PC-9 (cell line): ENCODE measurements at regions of chr2 and their contacts with region 1.

Region 1: GRCh38 chr2:149994057-149994753 is 406.6 kb upstream of the MMADHC start:
- DNase-seq: peak; percentile 89 to 95
- H3K4me3 ChIP-seq: no peak overlapping the region
- H3K27ac ChIP-seq: peak overlapping the region; percentile 82
- H3K4me1 ChIP-seq: peaks cover 30% of the 10 kb centered on the region
- H3K27me3 ChIP-seq: no peaks in the 10 kb centered on the region
- CTCF ChIP-seq: no peak

Region 2: DNA sequence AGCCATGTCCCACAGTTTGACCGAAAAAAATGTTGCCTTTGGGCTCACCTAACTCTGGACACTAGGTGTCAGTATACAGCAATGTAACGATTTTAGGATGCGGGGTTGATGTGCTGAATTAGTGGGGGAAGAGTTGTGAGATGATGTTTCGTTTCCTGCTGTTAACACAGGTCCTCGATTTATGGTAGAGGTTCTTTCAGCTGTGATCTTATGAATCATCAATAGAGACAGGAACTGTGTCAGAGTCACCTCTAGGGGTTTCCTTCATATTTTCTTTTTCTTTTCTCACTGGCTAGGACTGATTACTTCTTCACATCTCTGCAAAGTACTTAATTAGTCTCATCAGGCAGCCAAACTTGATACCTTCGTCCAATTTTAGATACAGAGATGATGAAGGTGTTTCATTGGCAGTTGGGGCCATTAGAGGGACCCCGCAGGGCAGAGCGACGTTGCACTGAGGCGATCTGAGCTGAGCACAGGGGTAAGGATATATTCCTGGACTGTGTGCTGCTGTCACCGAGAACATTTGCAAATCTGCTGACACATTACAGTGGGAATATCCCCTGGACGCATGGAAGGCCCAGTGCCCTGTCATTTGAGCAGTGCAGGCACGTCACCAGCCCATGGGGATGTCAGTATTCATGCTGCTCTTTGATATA is 396.4 kb before region 1 on chr2:
- CTCF ChIA-PET with region 1: no interaction called
- POLR2A ChIA-PET with region 1: interaction called, 3 read pairs
- intact Hi-C with region 1: loop called (anchors 1 kb)
- DNase-seq: peak; percentile 50 to 65
- H3K4me3 ChIP-seq: no peak overlapping the region
- H3K27ac ChIP-seq: no peak overlapping the region
- H3K4me1 ChIP-seq: peaks cover 6% of the 10 kb centered on the region; the same call in 1 of the 2 replicates
- H3K27me3 ChIP-seq: no peaks in the 10 kb centered on the region
- CTCF ChIP-seq: peak; percentile 70

Region 3: DNA sequence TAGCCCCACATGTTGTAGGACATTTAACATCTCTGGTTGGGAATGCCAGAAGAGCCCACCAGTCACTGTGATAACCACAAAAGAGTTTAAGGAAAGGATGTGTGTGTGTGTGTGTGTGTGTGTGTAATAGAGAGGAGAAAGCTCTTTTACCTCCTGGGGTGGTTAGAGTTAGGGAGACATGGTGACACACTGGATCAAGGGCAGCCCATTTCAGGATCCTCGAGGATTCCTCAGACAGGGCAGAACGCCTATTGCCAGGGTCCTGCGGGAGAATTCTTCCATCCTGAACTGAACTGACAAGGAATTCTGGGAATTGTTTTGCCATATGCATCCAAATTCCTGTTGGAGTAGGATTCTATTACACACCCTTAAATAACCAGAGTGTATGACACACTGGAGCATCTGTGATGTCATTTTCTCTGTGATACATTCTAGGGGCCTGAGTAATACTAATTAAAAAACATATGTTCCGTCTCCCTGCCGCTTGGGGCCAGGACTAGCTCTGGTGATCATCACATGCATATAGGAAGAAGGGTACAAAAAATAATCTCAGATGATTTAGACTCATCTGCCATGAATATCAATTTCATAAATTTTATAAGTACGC is 250.3 kb before region 1 on chr2:
- CTCF ChIA-PET with region 1: no interaction called
- POLR2A ChIA-PET with region 1: no interaction called
- intact Hi-C with region 1: no loop called
- DNase-seq: no peak
- H3K4me3 ChIP-seq: no peak overlapping the region
- H3K27ac ChIP-seq: no peak overlapping the region
- H3K4me1 ChIP-seq: no peaks in the 10 kb centered on the region
- H3K27me3 ChIP-seq: no peaks in the 10 kb centered on the region
- CTCF ChIP-seq: no peak

Region 4: DNA sequence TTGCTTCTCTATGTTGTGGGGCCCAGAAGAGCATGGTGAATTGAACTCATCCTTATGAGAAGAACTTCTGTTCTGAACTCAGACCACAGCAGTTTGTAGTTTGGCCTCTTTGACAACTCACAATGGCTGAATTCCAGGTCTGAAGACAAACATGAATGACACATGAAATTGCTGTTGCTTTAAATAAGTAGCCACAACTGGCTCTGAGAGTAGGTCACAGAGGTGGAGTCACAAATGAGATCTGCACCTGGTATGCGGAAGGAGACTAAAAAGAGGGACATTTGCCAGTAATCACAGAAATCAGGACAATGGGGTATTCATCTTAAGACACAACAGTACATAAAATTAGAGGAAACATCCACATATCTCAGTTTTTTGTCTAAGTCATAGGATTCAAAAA is 116.3 kb before region 1 on chr2:
- CTCF ChIA-PET with region 1: no interaction called
- POLR2A ChIA-PET with region 1: no interaction called
- intact Hi-C with region 1: loop called (anchors 1 kb)
- DNase-seq: peak; percentile 32 to 66
- H3K4me3 ChIP-seq: no peak overlapping the region
- H3K27ac ChIP-seq: 0 out of 2 replicates have a peak overlapping the region, but pooled peaks have one; percentile 26
- H3K4me1 ChIP-seq: 0 out of 2 replicates have a peak, but pooled peaks cover 6% of the 10 kb centered on the region
- H3K27me3 ChIP-seq: no peaks in the 10 kb centered on the region
- CTCF ChIP-seq: no peak

Region 5: DNA sequence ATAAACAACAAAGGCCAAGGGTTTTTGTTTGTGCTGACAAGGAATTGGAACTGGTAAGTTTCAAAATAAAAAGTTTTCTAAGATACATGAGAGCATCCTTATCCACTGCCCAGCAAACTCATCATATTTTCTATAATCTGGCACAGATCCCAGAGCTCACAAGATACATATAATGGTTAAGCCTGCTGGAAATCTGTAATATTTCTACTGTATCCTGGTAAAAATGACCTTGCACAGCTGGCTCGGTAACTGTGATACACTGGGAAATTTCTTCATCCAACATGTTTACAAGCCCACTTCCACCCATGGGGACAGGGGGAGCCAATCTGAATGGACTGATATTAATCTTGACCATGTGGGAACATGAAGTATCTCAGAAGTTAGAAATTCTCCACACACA is 18.8 kb after region 1 on chr2:
- CTCF ChIA-PET with region 1: no interaction called
- POLR2A ChIA-PET with region 1: no interaction called
- intact Hi-C with region 1: no loop called
- DNase-seq: no peak
- H3K4me3 ChIP-seq: no peak overlapping the region
- H3K27ac ChIP-seq: no peak overlapping the region
- H3K4me1 ChIP-seq: no peaks in the 10 kb centered on the region
- H3K27me3 ChIP-seq: no peaks in the 10 kb centered on the region
- CTCF ChIP-seq: no peak

Region 6: GRCh38 chr2:150188177-150188576 is 194.0 kb after region 1 on chr2:
- CTCF ChIA-PET with region 1: no interaction called
- POLR2A ChIA-PET with region 1: interaction called, 3 read pairs
- intact Hi-C with region 1: loop called (anchors 1 kb)
- DNase-seq: peak in 1 of 2 experiments; percentile 68
- H3K4me3 ChIP-seq: no peak overlapping the region
- H3K27ac ChIP-seq: peak overlapping the region; percentile 33; the same call in 1 of the 2 replicates
- H3K4me1 ChIP-seq: 0 out of 2 replicates have a peak, but pooled peaks cover 6% of the 10 kb centered on the region
- H3K27me3 ChIP-seq: no peaks in the 10 kb centered on the region
- CTCF ChIP-seq: no peak

Region 7: GRCh38 chr2:150472511-150472899 is 478.3 kb after region 1 on chr2:
- CTCF ChIA-PET with region 1: no interaction called
- POLR2A ChIA-PET with region 1: interaction called, 5 read pairs
- intact Hi-C with region 1: loop called (anchors 2 kb)
- DNase-seq: peak; percentile 80 to 82
- H3K4me3 ChIP-seq: no peak overlapping the region
- H3K27ac ChIP-seq: peak overlapping the region; percentile 55; the same call in 1 of the 2 replicates
- H3K4me1 ChIP-seq: peaks cover 68% of the 10 kb centered on the region
- H3K27me3 ChIP-seq: no peaks in the 10 kb centered on the region
- CTCF ChIP-seq: no peak

Region 8: GRCh38 chr2:150601280-150602038 is 607.3 kb after region 1 on chr2:
- CTCF ChIA-PET with region 1: no interaction called
- POLR2A ChIA-PET with region 1: interaction called, 3 read pairs
- intact Hi-C with region 1: loop called (anchors 1 kb)
- DNase-seq: peak; percentile 12 to 52
- H3K4me3 ChIP-seq: 0 out of 2 replicates have a peak overlapping the region, but pooled peaks have one; percentile 18
- H3K27ac ChIP-seq: peak overlapping the region; percentile 49
- H3K4me1 ChIP-seq: no peaks in the 10 kb centered on the region; the same call in 1 of the 2 replicates
- H3K27me3 ChIP-seq: no peaks in the 10 kb centered on the region
- CTCF ChIP-seq: no peak